A673 (cell line): ENCODE measurements at regions of chr3 and their contacts with region 1.

Region 1: DNA sequence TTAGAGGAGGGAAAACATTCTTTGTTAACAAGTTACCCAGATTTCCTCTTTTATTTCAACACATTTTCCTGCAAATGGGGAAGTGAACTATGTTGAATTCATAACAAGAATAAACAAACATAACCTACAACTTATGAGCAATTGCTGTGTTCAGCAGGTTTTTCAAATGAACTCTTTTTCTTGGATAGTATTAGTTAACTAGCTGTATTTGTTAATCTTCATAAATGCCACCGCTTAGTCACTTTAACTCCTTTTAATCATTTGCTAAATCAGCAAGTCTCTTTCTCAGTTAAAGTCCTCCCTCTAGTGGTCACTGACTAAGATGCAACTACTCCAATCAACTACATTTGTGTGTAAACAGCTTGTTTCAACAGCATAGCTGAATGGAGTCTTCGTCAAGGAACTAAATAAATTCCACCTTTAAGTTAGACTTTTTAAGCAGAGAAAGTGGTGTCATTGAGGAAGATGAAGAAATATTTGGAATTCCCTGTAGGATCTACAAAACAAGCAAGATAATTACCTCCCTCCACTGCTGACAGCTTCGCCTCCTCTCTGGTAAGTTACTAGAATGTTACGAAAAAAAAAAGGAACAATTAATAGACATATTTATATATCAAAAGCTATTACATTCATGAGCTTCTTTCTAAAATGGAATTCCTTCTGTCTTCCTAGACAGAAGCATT is 1122.0 kb downstream of the ROBO1 start:
- DNase-seq: peak; percentile 87
- H3K4me3 ChIP-seq: no peak overlapping the region
- H3K27ac ChIP-seq: no peak overlapping the region
- H3K4me1 ChIP-seq: peaks cover 12% of the 10 kb centered on the region
- H3K27me3 ChIP-seq: no peaks in the 10 kb centered on the region
- CTCF ChIP-seq: peak; percentile 89

Region 2: GRCh38 chr3:76685858-76686257 is 1959.9 kb before region 1 on chr3:
- CTCF ChIA-PET with region 1: no interaction called
- POLR2A ChIA-PET with region 1: no interaction called
- intact Hi-C with region 1: loop called (anchors 10 kb)
- DNase-seq: no peak
- H3K4me3 ChIP-seq: no peak overlapping the region
- H3K27ac ChIP-seq: no peak overlapping the region
- H3K4me1 ChIP-seq: peaks cover 13% of the 10 kb centered on the region
- H3K27me3 ChIP-seq: no peaks in the 10 kb centered on the region
- CTCF ChIP-seq: no peak

Region 3: DNA sequence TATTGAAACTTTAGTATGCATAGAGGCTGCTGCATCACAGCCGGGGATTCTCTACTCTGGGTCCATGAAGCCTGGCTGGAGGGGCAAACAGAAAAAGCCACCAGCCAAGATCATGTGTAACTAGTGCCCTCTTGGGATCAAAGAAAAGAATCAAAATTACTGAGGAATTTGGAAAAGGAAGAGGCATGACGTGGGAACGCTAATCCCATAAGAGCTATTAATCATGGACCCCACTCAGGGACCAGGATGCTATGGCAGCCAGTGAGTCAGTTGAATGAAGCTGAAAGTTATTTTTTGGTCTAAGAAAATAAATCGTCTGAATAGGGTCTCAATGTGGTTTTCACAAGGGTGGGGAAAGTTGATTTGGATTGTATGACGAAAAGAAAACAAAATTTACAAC is 440.8 kb before region 1 on chr3:
- CTCF ChIA-PET with region 1: no interaction called
- POLR2A ChIA-PET with region 1: no interaction called
- intact Hi-C with region 1: loop called (anchors 10 kb)
- DNase-seq: peak; percentile 85
- H3K4me3 ChIP-seq: no peak overlapping the region
- H3K27ac ChIP-seq: no peak overlapping the region
- H3K4me1 ChIP-seq: peaks cover 5% of the 10 kb centered on the region
- H3K27me3 ChIP-seq: no peaks in the 10 kb centered on the region
- CTCF ChIP-seq: peak; percentile 44; the same call in 1 of the 2 replicates

Region 4: GRCh38 chr3:78221300-78221699 is 424.5 kb before region 1 on chr3:
- CTCF ChIA-PET with region 1: interaction called, 3 read pairs
- POLR2A ChIA-PET with region 1: no interaction called
- intact Hi-C with region 1: loop called (anchors 5 kb)
- DNase-seq: no peak
- H3K4me3 ChIP-seq: no peak overlapping the region
- H3K27ac ChIP-seq: no peak overlapping the region
- H3K4me1 ChIP-seq: no peaks in the 10 kb centered on the region
- H3K27me3 ChIP-seq: no peaks in the 10 kb centered on the region
- CTCF ChIP-seq: no peak

Region 5: DNA sequence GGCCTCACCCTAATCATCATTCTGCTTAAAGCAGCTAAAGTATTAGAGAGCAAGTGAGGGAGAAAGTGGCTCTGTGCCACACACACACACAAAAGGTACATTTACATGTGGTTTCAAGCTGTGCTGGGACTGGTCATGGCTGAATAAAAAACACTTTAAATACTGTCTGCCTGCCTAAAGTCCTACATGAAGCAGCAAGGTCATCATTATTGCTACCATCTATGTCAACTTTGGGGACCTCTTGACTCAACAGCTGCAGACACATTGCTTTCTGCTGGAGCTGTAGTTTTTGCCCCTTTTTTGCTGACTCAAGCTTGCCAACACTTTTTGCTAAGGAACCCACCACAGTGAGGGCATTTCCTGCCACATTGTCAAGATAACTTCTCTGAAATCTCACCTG is 368.0 kb before region 1 on chr3:
- CTCF ChIA-PET with region 1: no interaction called
- POLR2A ChIA-PET with region 1: no interaction called
- intact Hi-C with region 1: loop called (anchors 10 kb)
- DNase-seq: no peak
- H3K4me3 ChIP-seq: no peak overlapping the region
- H3K27ac ChIP-seq: no peak overlapping the region
- H3K4me1 ChIP-seq: peaks cover 26% of the 10 kb centered on the region
- H3K27me3 ChIP-seq: no peaks in the 10 kb centered on the region
- CTCF ChIP-seq: no peak

Region 6: DNA sequence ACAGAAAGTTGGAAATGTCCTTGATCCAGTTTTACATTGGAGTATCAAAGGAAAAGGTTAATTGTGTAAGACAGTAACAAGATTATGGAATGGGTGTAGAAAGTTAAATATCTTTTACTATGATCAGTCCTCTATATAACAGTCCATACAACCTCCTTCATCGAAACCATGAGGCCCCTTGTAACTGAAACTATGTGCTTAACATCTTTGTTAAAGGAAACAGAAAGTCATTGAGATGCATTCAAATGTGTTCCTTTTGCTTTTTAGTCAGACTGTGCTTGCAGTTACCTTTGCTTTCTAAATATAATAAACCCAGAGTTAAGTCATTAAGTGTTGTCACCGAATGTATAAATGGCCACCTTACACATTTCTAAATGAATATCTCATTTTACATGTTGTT is 307.4 kb before region 1 on chr3:
- CTCF ChIA-PET with region 1: no interaction called
- POLR2A ChIA-PET with region 1: no interaction called
- intact Hi-C with region 1: loop called (anchors 10 kb)
- DNase-seq: peak; percentile 63
- H3K4me3 ChIP-seq: peak overlapping the region; percentile 0
- H3K27ac ChIP-seq: peak overlapping the region; percentile 84
- H3K4me1 ChIP-seq: peaks cover 49% of the 10 kb centered on the region
- H3K27me3 ChIP-seq: no peaks in the 10 kb centered on the region
- CTCF ChIP-seq: no peak

Region 7: GRCh38 chr3:78683284-78683683 is 37.5 kb after region 1 on chr3:
- CTCF ChIA-PET with region 1: no interaction called
- POLR2A ChIA-PET with region 1: no interaction called
- intact Hi-C with region 1: no loop called
- DNase-seq: no peak
- H3K4me3 ChIP-seq: no peak overlapping the region
- H3K27ac ChIP-seq: no peak overlapping the region
- H3K4me1 ChIP-seq: peaks cover 1% of the 10 kb centered on the region
- H3K27me3 ChIP-seq: no peaks in the 10 kb centered on the region
- CTCF ChIP-seq: no peak